Activated naive CD8-positive, alpha-beta T cell treated with anti-CD3 and anti-CD28 coated beads, Interleukin-2, amount 10 ng/mL, durations not matched to agents 7 days and 5 days (primary cell): ENCODE measurements at regions of chr16 and their contacts with region 1.

Region 1: DNA sequence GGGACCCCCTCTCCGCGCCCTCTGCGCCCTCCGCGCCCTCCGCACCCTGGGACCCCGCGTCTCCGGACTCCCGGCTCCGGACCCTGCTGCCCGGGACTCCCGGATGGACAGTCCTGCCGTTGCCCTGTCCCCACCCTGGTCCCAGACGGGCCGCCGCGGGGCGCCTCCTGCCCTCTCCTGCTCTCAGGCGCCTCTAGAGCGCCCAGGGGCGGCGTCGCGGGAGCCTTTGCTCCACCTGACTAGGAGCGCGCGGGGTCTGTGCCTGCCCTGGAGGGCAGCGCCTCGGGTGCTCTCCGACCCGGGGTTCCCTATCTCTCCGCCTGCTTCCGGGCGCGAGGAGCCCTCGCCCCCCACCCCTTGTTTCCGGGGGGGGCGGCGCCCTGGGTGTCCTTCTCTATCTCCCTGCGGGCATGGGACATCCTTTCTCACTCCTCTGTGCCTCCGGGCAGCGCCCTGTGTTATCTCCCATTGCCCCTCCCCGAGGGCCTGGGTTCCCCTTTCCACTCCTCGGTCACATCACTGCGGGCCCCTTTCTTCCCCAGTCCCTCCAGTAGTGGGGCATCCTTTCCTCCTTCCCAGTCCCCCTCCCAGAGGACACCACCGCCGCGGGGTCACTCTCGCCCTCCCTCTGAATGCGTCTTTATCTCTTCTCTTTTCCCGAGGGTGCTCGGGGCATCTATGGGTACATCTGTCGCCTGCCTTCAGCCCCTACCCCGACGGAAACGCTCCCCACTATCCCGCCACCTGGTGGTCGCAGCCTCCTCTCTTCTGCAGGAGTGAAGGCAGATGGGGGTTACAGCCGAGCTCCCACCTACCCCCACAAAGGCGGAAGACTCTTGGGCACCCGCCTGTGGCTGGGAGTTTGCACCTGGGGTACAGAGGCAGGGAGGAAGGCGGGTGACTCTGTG is 875 bp downstream of the PRKCB start:
- DNase-seq: peak; percentile 73
- ATAC-seq: peak; percentile 52
- H3K4me3 Mint-ChIP-seq: peak overlapping the region; percentile 98
- H3K27ac Mint-ChIP-seq: peak overlapping the region; percentile 95
- H3K4me1 Mint-ChIP-seq: peaks cover 50% of the 10 kb centered on the region
- H3K27me3 Mint-ChIP-seq: no peaks in the 10 kb centered on the region

Region 2: DNA sequence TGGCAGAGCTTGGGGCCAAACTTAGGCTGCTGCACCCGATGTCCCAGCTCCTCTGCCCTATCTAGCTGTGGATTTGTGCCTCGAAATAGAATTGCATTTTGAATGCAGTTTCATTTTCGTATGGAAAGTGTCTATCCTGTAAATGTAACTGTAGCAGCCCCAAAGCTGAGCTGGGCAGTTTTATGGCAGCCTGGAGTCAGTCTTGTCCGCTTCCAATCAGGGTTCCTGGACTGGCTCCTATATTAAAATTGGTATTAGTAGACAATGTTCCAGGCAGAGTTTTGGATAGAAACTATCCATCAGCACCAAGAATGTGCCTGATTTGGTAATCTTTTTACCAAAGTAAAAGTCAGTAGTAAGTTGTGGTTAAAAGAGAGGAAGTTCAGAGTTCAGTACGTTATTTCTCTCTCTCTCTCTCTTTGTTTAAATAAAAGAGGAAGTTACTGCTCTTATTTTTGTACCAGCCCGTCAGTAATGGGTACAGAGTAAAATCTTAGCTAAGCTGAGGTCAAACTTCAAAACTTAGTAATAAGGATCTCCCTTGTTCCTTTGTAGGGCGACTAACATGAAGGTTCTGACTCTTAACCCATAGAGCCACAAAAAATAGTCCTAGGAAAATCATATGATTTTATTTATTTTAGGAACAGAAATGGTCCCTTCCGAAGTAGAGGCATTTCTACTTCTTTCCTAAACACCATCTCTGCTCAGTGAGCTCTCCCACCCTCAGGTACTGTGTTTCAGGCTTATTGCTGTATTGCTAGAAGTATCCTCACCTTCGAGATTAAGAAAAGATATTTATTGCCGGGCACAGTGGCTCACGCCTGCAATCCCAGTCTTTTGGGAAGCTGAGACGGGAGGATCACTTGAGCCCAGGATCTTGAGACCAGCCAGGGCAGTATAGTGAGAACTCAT is 27.1 kb after region 1 on chr16:
- POLR2A ChIA-PET with region 1: interaction called, 12 read pairs
- DNase-seq: no peak
- ATAC-seq: peak; percentile 86
- H3K4me3 Mint-ChIP-seq: peak overlapping the region; percentile 88
- H3K27ac Mint-ChIP-seq: peak overlapping the region; percentile 95
- H3K4me1 Mint-ChIP-seq: peaks cover 66% of the 10 kb centered on the region
- H3K27me3 Mint-ChIP-seq: no peaks in the 10 kb centered on the region

Region 3: DNA sequence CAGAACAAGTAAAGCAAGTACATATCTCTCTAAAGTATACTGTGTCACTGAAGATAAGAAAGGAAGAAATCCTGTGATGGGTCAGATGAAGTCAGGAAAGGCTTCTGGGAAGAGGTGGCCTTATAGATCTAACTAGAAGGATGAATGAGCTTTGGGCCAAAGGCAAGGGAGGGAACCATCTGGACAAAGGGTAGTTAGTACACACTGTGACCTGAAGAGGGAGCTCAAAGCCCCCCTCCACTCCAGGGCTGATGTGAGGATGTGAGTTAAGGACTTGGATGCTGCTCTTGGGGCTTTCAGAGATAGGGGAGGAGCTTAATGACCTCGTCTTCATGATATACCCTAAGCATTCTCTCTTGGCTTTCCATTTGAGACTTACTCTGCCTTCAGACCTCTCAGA is 234.2 kb after region 1 on chr16:
- POLR2A ChIA-PET with region 1: no interaction called
- DNase-seq: no peak
- ATAC-seq: peak; percentile 58
- H3K4me3 Mint-ChIP-seq: no peak overlapping the region
- H3K27ac Mint-ChIP-seq: no peak overlapping the region
- H3K4me1 Mint-ChIP-seq: peaks cover 15% of the 10 kb centered on the region
- H3K27me3 Mint-ChIP-seq: no peaks in the 10 kb centered on the region